Heart right ventricle (tissue), 16 donors: ENCODE measurements at regions of chr1 and their contacts with region 1.

Region 1: GRCh38 chr1:89994805-89995597 is at the start of gene ZNF326:
- DNase-seq: peak; percentile 96 to 98
- ATAC-seq: peak; percentile 98 to 99 (median 99)
- H3K4me3 ChIP-seq: peak within 1 kb of the TSS; percentile 33 to 99 (median 92)
- H3K27ac ChIP-seq: peak within 1 kb of the TSS; percentile 78 to 99 (median 96)
- H3K4me1 ChIP-seq: peaks cover 0 to 40% (median 32%) of the 10 kb centered on the region in 9 donors
- H3K27me3 ChIP-seq: no peaks in the 10 kb centered on the region
- CTCF ChIP-seq: peak in 3 of 9 donors; percentile 3 to 24 (median 12)
- total RNA-seq, gene ZNF326: 11.2 to 13.4 (median 11.6) TPM

Region 2: DNA sequence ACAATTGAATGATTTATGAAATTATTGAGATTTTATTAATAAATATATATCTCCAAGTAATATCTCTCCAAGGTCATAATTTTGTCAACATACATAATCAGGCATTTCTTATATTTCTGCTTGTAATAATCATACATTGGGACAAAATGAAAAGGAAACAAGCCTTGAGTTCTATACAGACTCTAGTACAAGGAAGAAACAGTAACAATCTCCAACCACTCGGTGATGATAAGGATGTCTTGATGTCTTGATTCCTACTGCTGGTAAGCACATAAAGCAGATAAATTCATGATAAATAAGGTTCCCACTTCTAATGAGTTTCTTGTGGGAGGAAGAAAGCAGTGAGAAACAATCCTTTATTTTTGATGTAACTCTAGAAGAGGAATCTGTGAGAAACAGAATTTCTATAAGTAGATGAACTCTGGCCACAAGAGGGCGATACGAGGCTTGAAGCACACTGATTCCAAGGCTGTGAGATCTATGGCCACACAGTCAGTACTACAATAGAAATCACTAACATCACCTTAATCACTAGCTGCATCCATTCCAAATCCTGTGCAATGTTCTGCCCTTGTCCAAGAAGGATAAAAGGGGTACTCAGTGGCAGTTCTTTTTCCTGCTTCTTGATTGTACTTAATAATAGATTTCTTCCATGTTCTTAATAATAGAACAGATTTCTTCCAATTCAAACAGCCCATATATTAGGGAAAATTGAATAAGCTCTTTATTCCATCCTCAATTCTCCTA is 511.8 kb before region 1 on chr1:
- intact Hi-C with region 1: loop called in 1 of 10 experiments (anchors 10 kb)
- DNase-seq: peak; percentile 36 to 88
- ATAC-seq: peak in 7 of 8 donors; percentile 71 to 88 (median 81)
- H3K4me3 ChIP-seq: no peak overlapping the region
- H3K27ac ChIP-seq: no peak overlapping the region
- H3K4me1 ChIP-seq: peaks cover 0 to 9% (median 0%) of the 10 kb centered on the region in 9 donors
- H3K27me3 ChIP-seq: no peaks in the 10 kb centered on the region
- CTCF ChIP-seq: peak; percentile 60 to 91 (median 83)

Region 3: GRCh38 chr1:89622895-89623294 is 372.1 kb before region 1 on chr1:
- intact Hi-C with region 1: loop called in 1 of 10 experiments (anchors 10 kb)
- DNase-seq: no peak
- ATAC-seq: peak in 1 of 8 donors; percentile 47
- H3K4me3 ChIP-seq: no peak overlapping the region
- H3K27ac ChIP-seq: no peak overlapping the region
- H3K4me1 ChIP-seq: peaks cover 0 to 18% (median 3%) of the 10 kb centered on the region in 9 donors
- H3K27me3 ChIP-seq: no peaks in the 10 kb centered on the region
- CTCF ChIP-seq: peak in 3 of 9 donors; percentile 17 to 31 (median 29)

Region 4: GRCh38 chr1:89632657-89633247 is 362.2 kb before region 1 on chr1 and contains the start of gene LRRC8C:
- intact Hi-C with region 1: loop called in 3 of 10 experiments (anchors 10 kb)
- DNase-seq: peak; percentile 88 to 92
- ATAC-seq: peak; percentile 88 to 96 (median 94)
- H3K4me3 ChIP-seq: peak within 1 kb of the TSS; percentile 57 to 99 (median 96)
- H3K27ac ChIP-seq: peak within 1 kb of the TSS; percentile 93 to 99 (median 98)
- H3K4me1 ChIP-seq: peaks cover 10 to 77% (median 57%) of the 10 kb centered on the region in 9 donors
- H3K27me3 ChIP-seq: no peaks in the 10 kb centered on the region
- CTCF ChIP-seq: peak; percentile 29 to 84 (median 65)
- total RNA-seq, gene LRRC8C: 5.6 to 12.3 (median 8.3) TPM

Region 5: DNA sequence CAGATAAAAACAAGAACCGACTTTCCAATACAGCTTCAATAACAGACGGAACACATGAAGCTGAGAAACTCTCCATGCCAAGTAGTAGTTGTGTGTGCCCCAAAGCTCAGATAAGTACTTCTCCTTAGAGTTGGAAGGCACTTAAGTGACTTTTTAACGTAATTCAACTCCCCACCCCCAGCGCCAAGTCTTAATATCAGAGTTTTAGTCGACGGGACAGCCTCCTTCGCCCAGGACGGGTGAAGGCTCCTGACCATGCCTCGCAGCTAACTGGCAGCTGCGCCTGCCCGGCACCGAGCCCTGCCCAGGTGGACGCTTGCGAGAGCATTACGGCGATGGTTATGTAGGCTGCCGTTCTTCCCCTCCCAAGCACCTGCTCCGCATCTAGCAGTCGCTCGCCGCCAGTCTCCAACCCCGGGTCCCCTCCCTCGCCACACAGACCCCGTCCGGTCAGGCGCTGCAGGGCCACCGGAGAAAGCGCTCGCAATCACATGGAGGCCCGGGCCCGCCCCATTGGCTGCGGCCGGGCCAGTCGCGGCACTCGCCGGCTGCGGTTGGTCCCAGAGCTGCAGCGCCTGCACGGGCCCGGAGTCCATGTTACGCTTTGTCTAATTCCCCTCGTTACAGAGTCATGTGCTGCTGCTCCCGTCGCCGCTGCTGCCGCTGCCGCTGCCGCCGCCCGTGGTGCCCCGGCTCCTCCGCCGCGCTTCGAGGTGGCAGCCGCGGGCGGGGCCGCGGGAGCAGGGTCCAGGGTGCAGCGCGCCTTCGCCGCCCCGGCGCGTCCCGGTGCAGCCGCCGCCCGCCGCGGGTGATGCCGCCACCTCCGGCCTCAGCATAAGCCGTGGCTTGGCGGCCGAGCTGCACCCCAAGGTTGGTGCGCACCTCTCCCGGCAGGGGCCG is 174.3 kb before region 1 on chr1 and contains the start of gene LRRC8D:
- intact Hi-C with region 1: loop called in 2 of 10 experiments (anchors 2 to 5 kb)
- DNase-seq: peak; percentile 86
- ATAC-seq: peak; percentile 95 to 99 (median 97)
- H3K4me3 ChIP-seq: peak within 1 kb of the TSS; percentile 79 to 96 (median 90)
- H3K27ac ChIP-seq: peak within 1 kb of the TSS in 9 of 10 donors; percentile 75 to 90 (median 82)
- H3K4me1 ChIP-seq: peaks cover 0 to 47% (median 32%) of the 10 kb centered on the region in 9 donors
- H3K27me3 ChIP-seq: no peaks in the 10 kb centered on the region
- CTCF ChIP-seq: peak in 1 of 9 donors; percentile 9
- total RNA-seq, gene LRRC8D: 5.1 to 8.2 (median 6.6) TPM

Region 6: DNA sequence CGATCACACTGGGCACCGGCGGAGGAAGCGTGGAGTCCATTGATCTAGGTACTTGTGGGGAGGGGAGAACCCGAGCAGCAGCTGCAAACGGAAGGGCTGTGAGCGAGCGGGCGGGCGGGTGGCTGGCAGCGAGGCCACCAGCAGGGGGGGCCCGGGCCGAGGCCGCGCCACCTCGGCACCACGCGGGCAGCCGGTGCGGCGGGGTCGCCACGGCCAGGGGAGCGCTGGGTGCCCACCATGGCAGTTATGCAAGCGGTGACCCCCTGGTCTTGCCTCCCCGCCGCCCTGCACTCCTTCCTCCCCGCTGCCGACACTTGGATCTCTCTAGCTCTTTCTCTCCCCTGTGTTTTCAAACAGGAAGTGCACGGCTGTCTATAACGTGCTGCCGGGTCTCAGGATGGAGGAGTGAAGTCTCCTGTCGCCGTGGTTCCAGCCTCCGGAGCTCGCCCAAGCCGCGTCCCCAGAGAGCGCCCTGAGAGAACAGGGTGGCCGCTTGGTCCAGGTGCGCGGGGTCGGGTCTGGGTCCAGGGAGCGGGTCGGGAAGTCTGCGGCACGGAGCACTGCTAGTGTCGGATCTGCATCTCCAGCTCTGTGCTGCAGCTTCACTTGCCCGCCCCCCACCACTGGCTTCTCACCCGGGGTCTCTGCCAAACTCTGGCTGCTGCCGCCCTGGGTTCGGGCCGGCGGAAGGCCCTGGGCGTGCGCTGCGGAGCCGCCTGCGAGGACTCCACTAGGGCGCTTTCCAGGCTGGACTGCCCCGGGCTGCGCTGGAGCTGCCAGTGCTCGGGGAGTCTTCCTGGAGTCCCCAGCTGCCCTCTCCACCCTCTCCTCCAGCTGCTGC is 151.5 kb before region 1 on chr1:
- intact Hi-C with region 1: no loop called
- DNase-seq: peak; percentile 48 to 76
- ATAC-seq: peak; percentile 91 to 96 (median 94)
- H3K4me3 ChIP-seq: peak overlapping the region; percentile 58 to 86 (median 73)
- H3K27ac ChIP-seq: peak overlapping the region; percentile 15 to 89 (median 69)
- H3K4me1 ChIP-seq: peaks cover 0 to 39% (median 17%) of the 10 kb centered on the region in 9 donors
- H3K27me3 ChIP-seq: no peaks in the 10 kb centered on the region
- CTCF ChIP-seq: peak; percentile 52 to 86 (median 72)

Region 7: GRCh38 chr1:89962024-89962741 is 32.8 kb before region 1 on chr1:
- intact Hi-C with region 1: no loop called
- DNase-seq: peak in 1 of 2 donors; percentile 21
- ATAC-seq: peak in 5 of 8 donors; percentile 22 to 73 (median 33)
- H3K4me3 ChIP-seq: no peak overlapping the region
- H3K27ac ChIP-seq: peak overlapping the region in 1 of 10 donors; percentile 11
- H3K4me1 ChIP-seq: peaks cover 0 to 21% (median 5%) of the 10 kb centered on the region in 9 donors
- H3K27me3 ChIP-seq: no peaks in the 10 kb centered on the region
- CTCF ChIP-seq: no peak

Region 8: GRCh38 chr1:90176530-90176929 is 181.5 kb after region 1 on chr1:
- intact Hi-C with region 1: no loop called
- DNase-seq: no peak
- ATAC-seq: no peak
- H3K4me3 ChIP-seq: no peak overlapping the region
- H3K27ac ChIP-seq: no peak overlapping the region
- H3K4me1 ChIP-seq: peaks cover 0 to 11% (median 0%) of the 10 kb centered on the region in 9 donors
- H3K27me3 ChIP-seq: no peaks in the 10 kb centered on the region
- CTCF ChIP-seq: no peak

Region 9: GRCh38 chr1:91736715-91737615 is 1742.0 kb after region 1 on chr1:
- intact Hi-C with region 1: no loop called
- DNase-seq: no peak
- ATAC-seq: peak; percentile 43 to 83 (median 62)
- H3K4me3 ChIP-seq: no peak overlapping the region
- H3K27ac ChIP-seq: peak overlapping the region; percentile 51 to 73 (median 62)
- H3K4me1 ChIP-seq: peaks cover 3 to 48% (median 32%) of the 10 kb centered on the region in 9 donors
- H3K27me3 ChIP-seq: no peaks in the 10 kb centered on the region
- CTCF ChIP-seq: no peak